Naive thymus-derived CD4-positive, alpha-beta T cell (primary cell): ENCODE measurements at regions of chr18 and their contacts with region 1.

Region 1: DNA sequence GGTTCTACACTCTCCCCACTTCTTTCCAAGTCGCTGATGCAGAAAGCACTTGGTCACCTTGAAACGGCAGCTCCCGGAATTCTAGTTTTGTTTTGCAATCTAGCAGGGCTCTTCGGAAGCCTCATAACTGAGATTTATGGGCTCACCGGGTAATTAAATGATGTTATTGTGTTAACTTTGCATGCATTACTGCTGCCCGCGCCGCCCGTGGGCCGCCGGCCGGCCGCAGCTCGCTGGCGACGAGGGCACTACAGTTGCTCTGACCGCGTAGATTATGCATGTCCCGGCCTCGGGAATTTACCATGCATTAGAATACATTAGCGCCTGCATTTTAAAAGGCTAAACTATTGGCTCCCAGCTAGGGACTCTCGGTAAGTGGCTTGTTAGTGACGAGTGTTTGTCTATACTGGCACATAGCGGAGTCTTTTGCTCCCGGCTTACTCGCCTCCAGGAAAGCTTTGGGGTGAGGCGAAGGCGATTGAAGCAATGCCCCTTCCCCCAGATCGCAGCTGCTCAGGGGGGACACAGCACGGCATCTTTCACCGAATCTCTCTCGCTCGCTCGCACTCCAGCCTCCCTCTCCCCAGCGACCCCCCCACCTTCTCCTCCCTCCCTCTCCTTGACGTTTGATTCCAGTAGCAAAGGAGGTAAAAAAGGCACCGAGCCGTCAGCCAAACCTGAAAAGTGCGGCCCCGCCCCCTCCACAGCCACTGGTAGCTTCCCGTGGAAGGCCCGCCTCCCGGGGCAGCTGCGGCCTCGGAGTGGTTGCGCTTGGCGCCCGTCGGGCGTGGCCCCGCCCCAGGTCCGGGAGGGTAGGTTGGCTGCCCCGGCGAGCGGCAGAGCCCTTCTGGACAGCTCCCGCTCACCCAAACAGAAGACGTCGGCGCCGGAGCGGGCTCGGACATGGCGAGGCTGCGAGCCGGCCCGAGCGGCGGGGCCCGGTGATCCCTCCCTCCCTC is at the start of gene ONECUT2:
- DNase-seq: peak in 8 of 9 donors; percentile 23 to 47 (median 40)
- ATAC-seq: peak; percentile 87
- H3K4me3 ChIP-seq: peak within 1 kb of the TSS; percentile 27
- H3K4me3 Mint-ChIP-seq: peak within 1 kb of the TSS; percentile 68 to 84 (median 76)
- H3K27ac ChIP-seq: no peak within 1 kb of the TSS
- H3K27ac Mint-ChIP-seq: peak within 1 kb of the TSS in 4 of 9 donors; percentile 8 to 77 (median 46)
- H3K4me1 ChIP-seq: peaks cover 1 to 12% of the 10 kb centered on the region in 2 donors
- H3K4me1 Mint-ChIP-seq: peaks cover 20 to 64% (median 42%) of the 10 kb centered on the region in 7 donors
- H3K27me3 ChIP-seq: peaks cover 8 to 44% of the 10 kb centered on the region in 2 donors
- H3K27me3 Mint-ChIP-seq: peaks cover 78 to 90% (median 84%) of the 10 kb centered on the region in 5 donors
- total RNA-seq, gene ONECUT2: not detected

Region 2: DNA sequence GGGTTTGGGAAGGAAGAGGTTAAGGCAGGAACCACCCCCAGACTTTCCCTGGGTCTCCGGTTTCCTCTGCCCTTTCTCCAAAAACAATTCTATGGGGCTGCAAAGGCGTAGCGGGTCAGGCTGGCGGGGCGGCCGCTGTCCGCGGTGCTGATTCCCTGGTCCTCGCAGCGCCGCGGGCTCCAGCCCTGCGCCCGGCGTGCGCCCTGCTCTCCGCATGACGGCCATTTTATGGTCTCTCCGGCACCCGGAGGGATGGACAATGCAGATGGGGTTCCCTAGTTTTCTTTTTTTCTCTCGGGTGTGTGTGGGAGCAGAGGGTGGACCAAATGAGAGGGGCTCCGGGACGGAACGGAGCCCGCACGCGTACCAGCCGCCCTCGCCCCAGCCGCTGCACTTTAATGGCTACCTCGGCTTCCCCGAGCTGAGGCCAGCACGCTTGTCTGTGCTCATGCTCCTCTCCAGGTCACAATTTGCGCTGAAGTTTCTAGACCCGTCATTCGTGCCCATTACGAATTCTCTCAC is 80.8 kb before region 1 on chr18:
- CTCF ChIA-PET with region 1: no interaction called
- POLR2A ChIA-PET with region 1: no interaction called
- intact Hi-C with region 1: loop called in 1 of 2 experiments (anchors 5 kb)
- DNase-seq: peak in 2 of 9 donors; percentile 1 to 43
- ATAC-seq: no peak
- H3K4me3 ChIP-seq: no peak overlapping the region
- H3K4me3 Mint-ChIP-seq: peak overlapping the region in 1 of 10 donors; percentile 29
- H3K27ac ChIP-seq: no peak overlapping the region
- H3K27ac Mint-ChIP-seq: no peak overlapping the region
- H3K4me1 ChIP-seq: no peaks in the 10 kb centered on the region
- H3K4me1 Mint-ChIP-seq: peaks cover 0 to 8% (median 0%) of the 10 kb centered on the region in 7 donors
- H3K27me3 ChIP-seq: peaks cover 0 to 5% of the 10 kb centered on the region in 2 donors
- H3K27me3 Mint-ChIP-seq: peaks cover 50 to 61% (median 58%) of the 10 kb centered on the region in 5 donors

Region 3: GRCh38 chr18:57803103-57803969 is 368.5 kb after region 1 on chr18 and contains the start of gene ATP8B1:
- CTCF ChIA-PET with region 1: no interaction called
- POLR2A ChIA-PET with region 1: no interaction called
- intact Hi-C with region 1: loop called in 1 of 2 experiments (anchors 10 kb)
- DNase-seq: no peak
- ATAC-seq: peak; percentile 31
- H3K4me3 ChIP-seq: no peak within 1 kb of the TSS
- H3K4me3 Mint-ChIP-seq: peak within 1 kb of the TSS in 8 of 10 donors; percentile 13 to 82 (median 67)
- H3K27ac ChIP-seq: no peak within 1 kb of the TSS
- H3K27ac Mint-ChIP-seq: peak within 1 kb of the TSS in 1 of 9 donors; percentile 55
- H3K4me1 ChIP-seq: no peaks in the 10 kb centered on the region
- H3K4me1 Mint-ChIP-seq: peaks cover 0 to 18% (median 9%) of the 10 kb centered on the region in 7 donors
- H3K27me3 ChIP-seq: peaks cover 0 to 4% of the 10 kb centered on the region in 2 donors
- H3K27me3 Mint-ChIP-seq: peaks cover 46 to 73% (median 50%) of the 10 kb centered on the region in 5 donors
- total RNA-seq, gene ATP8B1: not detected

Region 4: DNA sequence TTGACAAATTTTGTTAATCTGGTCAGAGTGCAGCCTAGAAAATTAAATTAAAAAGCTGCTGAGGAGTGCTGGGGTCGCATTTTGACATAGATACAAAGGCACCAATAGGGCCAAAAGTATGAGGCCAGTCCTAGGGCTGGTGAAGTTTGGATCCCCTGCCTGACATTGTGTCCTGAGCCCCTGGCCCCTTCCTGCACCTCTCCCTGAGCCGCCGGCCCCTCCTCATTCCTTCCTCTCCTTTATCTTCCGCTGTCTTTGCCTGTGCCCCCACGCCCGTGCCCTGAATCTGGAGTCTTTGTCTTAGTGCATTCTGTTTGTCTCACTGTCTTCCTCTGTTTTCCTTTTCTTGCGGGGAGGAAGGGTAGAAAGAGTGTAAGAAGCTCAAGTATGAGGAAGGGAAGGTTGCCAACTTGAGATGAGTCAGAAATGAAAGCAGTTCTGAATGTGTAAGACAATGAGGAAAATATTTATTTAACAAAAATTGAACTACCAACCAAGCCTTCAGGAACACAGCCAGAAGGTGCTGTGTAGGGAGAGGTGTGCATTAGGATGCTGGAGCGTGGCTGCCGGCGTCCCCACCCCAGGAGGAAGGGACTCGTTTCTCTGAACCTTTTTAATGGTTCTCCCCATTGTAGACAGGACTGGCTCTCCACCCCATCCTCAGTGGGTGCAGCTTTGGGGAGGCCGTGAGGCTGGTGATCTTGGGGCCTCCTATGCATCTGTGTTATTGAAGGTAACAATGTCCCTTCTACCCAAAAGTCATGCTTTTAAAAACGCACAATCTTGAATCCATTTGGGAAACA is 742.3 kb after region 1 on chr18:
- CTCF ChIA-PET with region 1: no interaction called
- POLR2A ChIA-PET with region 1: no interaction called
- intact Hi-C with region 1: no loop called
- DNase-seq: no peak
- ATAC-seq: no peak
- H3K4me3 ChIP-seq: no peak overlapping the region
- H3K4me3 Mint-ChIP-seq: no peak overlapping the region
- H3K27ac ChIP-seq: no peak overlapping the region
- H3K27ac Mint-ChIP-seq: peak overlapping the region in 1 of 9 donors; percentile 3
- H3K4me1 ChIP-seq: no peaks in the 10 kb centered on the region
- H3K4me1 Mint-ChIP-seq: peaks cover 0 to 4% (median 0%) of the 10 kb centered on the region in 7 donors
- H3K27me3 ChIP-seq: peaks cover 0 to 6% of the 10 kb centered on the region in 2 donors
- H3K27me3 Mint-ChIP-seq: peaks cover 0 to 12% (median 9%) of the 10 kb centered on the region in 5 donors

Region 5: GRCh38 chr18:59200787-59201186 is 1766.0 kb after region 1 on chr18:
- CTCF ChIA-PET with region 1: no interaction called
- POLR2A ChIA-PET with region 1: no interaction called
- intact Hi-C with region 1: no loop called
- DNase-seq: no peak
- ATAC-seq: no peak
- H3K4me3 ChIP-seq: no peak overlapping the region
- H3K4me3 Mint-ChIP-seq: no peak overlapping the region
- H3K27ac ChIP-seq: no peak overlapping the region
- H3K27ac Mint-ChIP-seq: no peak overlapping the region
- H3K4me1 ChIP-seq: no peaks in the 10 kb centered on the region
- H3K4me1 Mint-ChIP-seq: no peaks in the 10 kb centered on the region
- H3K27me3 ChIP-seq: no peaks in the 10 kb centered on the region
- H3K27me3 Mint-ChIP-seq: peaks cover 24 to 47% (median 34%) of the 10 kb centered on the region in 5 donors